ENCODE measurements at regions of chr18 and their contacts with region 1.

Region 1: DNA sequence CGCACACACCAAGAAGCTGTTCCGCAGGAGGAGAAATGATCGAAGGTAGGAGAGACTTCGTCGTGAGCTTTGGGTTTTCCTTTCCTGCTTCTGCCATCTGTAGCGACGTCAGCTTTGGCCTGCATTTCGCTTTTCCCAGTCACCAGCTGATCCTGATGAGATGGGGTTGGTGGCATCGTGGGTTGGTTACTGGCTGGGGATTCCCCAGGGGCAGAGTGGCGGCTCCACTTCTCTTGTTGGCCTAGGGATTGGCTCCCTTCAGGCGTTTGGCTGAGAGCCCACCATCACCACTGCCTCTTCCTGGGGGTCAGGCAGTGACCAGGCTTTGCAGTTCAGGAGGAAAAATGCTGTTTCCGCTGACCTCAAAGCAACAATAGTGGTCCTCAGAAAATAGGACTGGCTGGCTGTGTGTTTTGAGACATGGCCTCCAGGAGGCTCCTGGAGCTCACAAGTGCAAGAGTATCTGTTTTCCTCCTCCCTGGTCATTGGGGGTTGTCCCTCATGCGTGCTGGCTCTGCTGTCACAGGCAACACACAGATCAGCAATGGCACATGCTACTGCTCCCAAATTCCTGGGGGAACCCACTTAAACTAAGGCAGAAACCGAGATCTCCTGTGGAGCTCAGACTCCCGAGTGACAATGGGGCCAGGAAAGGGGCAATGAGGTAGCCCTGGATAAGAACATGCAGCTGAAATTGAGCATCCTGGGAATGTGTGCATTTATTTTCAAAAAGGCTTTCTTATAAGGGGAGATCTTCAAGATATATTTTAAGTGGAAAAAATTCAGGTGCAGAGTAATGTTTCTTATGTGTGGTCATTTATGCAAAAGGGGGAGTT is 173.0 kb downstream of the CTIF start:
- DNase-seq: no peak
- H3K4me3 ChIP-seq: no peak overlapping the region
- H3K27ac ChIP-seq: no peak overlapping the region
- H3K4me1 ChIP-seq: peaks cover 0 to 10% (median 5%) of the 10 kb centered on the region in 4 experiments; a peak in 3 of 7 replicates
- H3K27me3 ChIP-seq: no peaks in the 10 kb centered on the region
- CTCF ChIP-seq: peak; percentile 39 to 78 (median 58)
- EP300 ChIP-seq: no peak
- POLR2A ChIP-seq: no peak
- RAD21 ChIP-seq: peak; percentile 86 to 87

Region 2: DNA sequence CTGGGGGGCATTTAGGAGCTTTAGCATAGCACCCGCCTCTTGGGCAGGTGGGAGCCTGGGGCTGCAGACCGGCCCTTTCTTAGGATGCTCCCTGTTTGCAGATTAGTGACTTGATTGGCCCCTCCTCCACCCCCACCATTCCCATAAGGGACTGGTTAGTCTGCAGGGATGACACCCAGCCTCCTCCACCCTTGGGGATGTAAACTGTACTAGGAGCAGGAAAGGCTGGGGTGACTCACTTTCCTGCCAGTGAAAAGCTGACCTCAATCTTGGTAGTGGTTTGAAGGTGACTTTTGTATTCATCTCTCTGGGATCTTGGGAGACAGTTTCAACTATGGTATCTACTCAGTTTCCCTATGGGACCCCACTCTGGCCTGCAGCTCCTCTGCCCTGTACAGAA is 148.8 kb before region 1 on chr18:
- CTCF ChIA-PET with region 1: no interaction called
- POLR2A ChIA-PET with region 1: no interaction called
- DNase-seq: no peak
- H3K4me3 ChIP-seq: no peak overlapping the region
- H3K27ac ChIP-seq: no peak overlapping the region
- H3K4me1 ChIP-seq: peaks cover 0 to 2% (median 0%) of the 10 kb centered on the region in 4 experiments; a peak in 4 of 7 replicates
- H3K27me3 ChIP-seq: no peaks in the 10 kb centered on the region
- CTCF ChIP-seq: no peak
- EP300 ChIP-seq: no peak
- POLR2A ChIP-seq: no peak
- RAD21 ChIP-seq: no peak

Region 3: DNA sequence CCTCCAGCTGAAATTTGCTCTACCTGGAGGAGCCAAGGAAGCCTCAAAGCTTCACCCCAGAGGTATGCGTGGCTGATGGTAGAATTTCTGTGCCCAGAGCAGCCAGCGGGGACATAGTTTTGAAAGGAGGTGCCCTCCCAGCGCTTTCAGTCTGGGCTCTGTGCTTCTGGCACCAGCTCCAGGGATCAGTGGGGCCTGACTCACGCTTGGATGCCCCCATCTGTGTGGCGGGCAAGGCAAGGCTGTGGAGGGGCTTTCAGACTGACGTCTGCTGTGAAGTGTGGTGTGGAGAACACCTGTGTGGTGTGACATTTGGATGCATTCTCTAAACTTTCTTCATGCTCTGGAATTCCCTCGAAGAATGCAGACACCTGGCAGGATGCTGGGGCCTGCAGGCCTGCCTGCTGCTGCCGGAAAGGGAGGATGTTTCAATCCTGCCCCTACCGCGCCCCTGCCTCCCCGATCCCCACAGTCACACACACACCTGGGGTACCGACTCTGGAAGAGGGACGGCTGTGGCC is 88.9 kb before region 1 on chr18:
- CTCF ChIA-PET with region 1: no interaction called
- POLR2A ChIA-PET with region 1: no interaction called
- DNase-seq: no peak
- H3K4me3 ChIP-seq: no peak overlapping the region
- H3K27ac ChIP-seq: no peak overlapping the region; the same call in 1 of the 2 replicates
- H3K4me1 ChIP-seq: peaks cover 0 to 7% (median 3%) of the 10 kb centered on the region in 4 experiments; a peak in 5 of 7 replicates
- H3K27me3 ChIP-seq: no peaks in the 10 kb centered on the region
- CTCF ChIP-seq: no peak
- EP300 ChIP-seq: no peak
- POLR2A ChIP-seq: no peak
- RAD21 ChIP-seq: no peak

Region 4: GRCh38 chr18:48698707-48699106 is 13.2 kb before region 1 on chr18:
- CTCF ChIA-PET with region 1: interaction called, 24 read pairs
- POLR2A ChIA-PET with region 1: no interaction called
- DNase-seq: no peak
- H3K4me3 ChIP-seq: no peak overlapping the region
- H3K27ac ChIP-seq: no peak overlapping the region
- H3K4me1 ChIP-seq: no peaks in the 10 kb centered on the region
- H3K27me3 ChIP-seq: no peaks in the 10 kb centered on the region
- CTCF ChIP-seq: no peak
- EP300 ChIP-seq: no peak
- POLR2A ChIP-seq: no peak
- RAD21 ChIP-seq: no peak

Region 5: GRCh38 chr18:48736321-48737260 is 24.7 kb after region 1 on chr18:
- CTCF ChIA-PET with region 1: interaction called, 14 read pairs
- POLR2A ChIA-PET with region 1: interaction called, 3 read pairs
- DNase-seq: no peak
- H3K4me3 ChIP-seq: no peak overlapping the region
- H3K27ac ChIP-seq: no peak overlapping the region
- H3K4me1 ChIP-seq: peaks cover 0 to 6% (median 1%) of the 10 kb centered on the region in 4 experiments; a peak in 2 of 7 replicates
- H3K27me3 ChIP-seq: no peaks in the 10 kb centered on the region
- CTCF ChIP-seq: no peak
- EP300 ChIP-seq: no peak
- POLR2A ChIP-seq: no peak
- RAD21 ChIP-seq: no peak